Adrenal gland (tissue), 19 donors: ENCODE measurements at regions of chr17 and their contacts with region 1.

Region 1: DNA sequence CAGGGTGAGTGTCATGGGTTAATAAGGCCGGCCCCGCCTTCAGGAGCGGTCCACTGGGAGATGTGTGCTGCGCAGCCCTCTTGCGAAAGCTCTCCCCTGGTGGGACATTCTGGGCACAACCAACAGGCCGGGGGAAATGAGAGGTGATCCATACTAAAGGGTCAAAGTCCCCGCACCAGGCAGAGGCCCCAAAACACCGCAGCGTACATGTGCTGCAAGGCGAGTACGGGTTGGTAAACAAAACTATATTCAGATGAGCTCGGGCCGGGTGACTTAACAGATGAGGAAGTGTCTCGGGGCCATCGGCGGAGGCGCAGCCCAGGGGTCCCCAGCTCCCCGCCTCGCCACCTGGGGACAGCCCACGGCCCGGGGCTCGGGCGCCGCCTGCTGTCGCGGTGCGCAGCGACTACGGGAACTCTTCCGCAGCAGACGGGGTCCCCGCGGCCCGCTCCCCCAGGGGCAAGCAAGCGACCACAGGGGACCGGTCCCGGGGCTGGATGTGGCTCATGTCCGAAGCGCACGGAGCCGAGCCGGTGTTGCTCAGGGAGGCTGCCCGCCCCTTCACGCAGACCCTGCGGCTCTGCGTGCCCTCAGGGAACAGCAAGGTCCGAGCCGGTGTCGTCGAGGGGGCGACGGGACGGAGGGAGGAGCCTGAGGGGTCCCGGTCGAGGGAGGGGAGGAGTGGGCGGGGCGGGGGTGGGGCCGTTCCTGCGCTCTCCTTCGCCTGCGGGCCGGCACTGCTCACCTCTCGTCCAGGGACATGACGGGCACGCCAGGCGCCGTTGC is at the start of gene RAB37:
- DNase-seq: peak in 2 of 7 donors; percentile 20 to 59
- H3K4me3 ChIP-seq: peak within 1 kb of the TSS in 1 of 4 donors; percentile 25
- H3K27ac ChIP-seq: no peak within 1 kb of the TSS
- H3K4me1 ChIP-seq: peaks cover 0 to 15% of the 10 kb centered on the region in 2 donors
- H3K27me3 ChIP-seq: peaks cover 36% of the 10 kb centered on the region
- CTCF ChIP-seq: peak in 5 of 6 experiments; percentile 13 to 45 (median 37)
- POLR2A ChIP-seq: no peak
- total RNA-seq, gene RAB37: 0.39 to 6.6 (median 3.5) TPM

Region 2: DNA sequence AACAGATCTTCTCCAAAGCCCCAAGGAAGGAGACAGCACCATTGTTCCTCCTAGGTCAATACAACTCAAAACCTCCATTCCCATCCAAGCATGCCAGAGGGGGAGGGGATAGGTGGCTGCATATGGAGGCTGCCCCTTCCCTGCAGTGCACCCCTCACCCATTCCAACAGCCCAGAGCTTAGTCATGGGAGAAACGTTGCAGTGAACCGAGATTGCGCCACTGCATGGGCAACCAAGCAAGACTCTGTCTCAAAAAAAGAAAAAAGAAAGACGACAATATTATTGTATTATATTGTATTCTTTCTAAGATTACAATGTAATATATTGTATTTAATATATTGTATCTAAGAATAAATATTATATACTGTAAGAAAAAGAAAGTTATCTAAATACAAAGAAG is 76.8 kb before region 1 on chr17:
- intact Hi-C with region 1: loop called (anchors 5 to 10 kb)
- DNase-seq: no peak
- H3K4me3 ChIP-seq: no peak overlapping the region
- H3K27ac ChIP-seq: no peak overlapping the region
- H3K4me1 ChIP-seq: no peaks in the 10 kb centered on the region
- H3K27me3 ChIP-seq: peaks cover 4% of the 10 kb centered on the region
- CTCF ChIP-seq: no peak
- POLR2A ChIP-seq: no peak

Region 3: DNA sequence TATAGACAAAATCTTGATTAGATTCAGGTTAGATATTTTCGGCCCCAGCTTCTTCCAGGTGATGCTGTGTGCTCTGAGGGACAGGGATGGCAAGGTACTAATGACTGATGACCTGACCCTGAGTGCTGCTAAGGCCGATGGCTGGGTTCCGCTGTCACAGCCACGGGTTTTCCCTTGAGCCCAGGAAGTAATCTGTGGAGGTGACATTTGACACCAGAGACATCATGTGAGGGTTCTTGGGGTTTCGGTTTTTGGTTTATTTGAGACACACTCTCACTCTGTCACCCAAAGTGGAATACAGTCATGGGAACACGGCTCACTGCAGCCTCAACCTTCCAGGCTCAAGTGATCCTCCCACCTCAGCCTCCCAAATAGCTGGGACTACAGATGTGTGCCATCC is 208.8 kb after region 1 on chr17:
- intact Hi-C with region 1: no loop called
- DNase-seq: no peak
- H3K4me3 ChIP-seq: no peak overlapping the region
- H3K27ac ChIP-seq: no peak overlapping the region
- H3K4me1 ChIP-seq: no peaks in the 10 kb centered on the region
- H3K27me3 ChIP-seq: peaks cover 10% of the 10 kb centered on the region
- CTCF ChIP-seq: no peak
- POLR2A ChIP-seq: no peak